Left cardiac atrium (tissue), 4 donors: ENCODE measurements at regions of chr7 and their contacts with region 1.

Region 1: GRCh38 chr7:985915-986741 is 3.1 kb downstream of the CYP2W1 start:
- DNase-seq: no peak
- ATAC-seq: no peak

Region 2: DNA sequence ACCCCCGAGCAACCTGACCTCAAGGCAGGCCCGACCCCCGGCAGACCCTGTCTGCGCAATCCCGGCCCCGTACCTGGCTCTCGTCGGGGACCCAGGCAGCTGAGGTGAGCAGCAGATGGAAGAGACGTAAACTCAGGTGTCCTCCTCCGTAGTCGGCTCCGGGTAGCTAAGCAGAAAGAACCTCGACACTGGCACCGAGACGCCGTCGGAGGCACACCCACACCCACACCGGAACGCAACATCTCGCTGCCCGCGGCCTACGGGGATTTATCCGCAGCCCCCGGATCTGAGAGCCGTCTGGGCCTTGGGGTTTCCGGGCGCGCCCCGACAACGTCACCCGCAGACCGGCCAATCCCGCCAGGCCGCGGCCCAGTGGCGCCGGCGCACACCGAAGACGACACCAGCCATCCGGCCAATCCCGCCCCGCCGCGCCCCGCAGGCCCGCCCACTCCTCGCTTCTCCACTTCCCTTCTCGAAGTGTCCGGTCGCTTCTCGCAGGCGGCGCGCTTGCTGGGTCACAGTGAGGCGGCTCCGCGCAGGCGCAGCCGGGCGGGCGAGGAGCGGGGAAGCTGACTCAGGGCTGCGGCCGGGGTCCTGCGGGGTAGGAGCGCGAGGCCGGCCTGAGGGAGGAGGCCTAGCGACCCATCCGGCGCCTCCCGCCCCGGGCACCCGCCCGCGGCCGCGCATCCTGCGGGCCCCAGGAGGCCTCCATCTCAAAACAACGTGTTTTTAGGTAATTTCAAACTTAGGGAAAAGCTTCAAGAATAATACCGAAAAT is 174.0 kb after region 1 on chr7 and contains the start of gene ZFAND2A:
- intact Hi-C with region 1: loop called in 1 of 2 experiments (anchors 10 kb)
- DNase-seq: peak; percentile 99
- ATAC-seq: peak; percentile 99 to 100
- total RNA-seq, gene ZFAND2A: 9.8 to 16.7 TPM